Mucosa of descending colon (tissue), 3 donors: ENCODE measurements at regions of chr15 and their contacts with region 1.

Region 1: DNA sequence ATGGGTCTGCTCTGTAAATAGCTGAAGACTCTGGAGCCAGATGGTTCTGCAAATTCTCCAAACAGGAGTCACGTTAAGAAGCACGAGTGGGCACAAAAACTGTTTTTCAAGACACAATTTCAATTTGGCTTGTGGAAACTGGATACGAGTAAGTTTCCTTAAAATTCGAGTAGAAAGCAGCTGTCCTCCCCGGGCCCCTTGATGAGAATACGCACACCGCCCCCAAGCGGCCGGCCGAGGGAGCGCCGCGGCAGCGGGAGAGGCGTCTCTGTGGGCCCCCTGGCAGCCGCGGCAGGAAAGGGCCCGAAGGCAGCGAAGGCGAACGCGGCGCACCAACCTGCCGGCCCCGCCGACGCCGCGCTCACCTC is 778 bp upstream of the THBS1 start:
- DNase-seq: peak; percentile 93 to 99 (median 98)
- ATAC-seq: peak; percentile 83
- H3K4me3 ChIP-seq: peak overlapping the region; percentile 64
- H3K4me1 ChIP-seq: peaks cover 20% of the 10 kb centered on the region
- CTCF ChIP-seq: peak; percentile 96

Region 2: GRCh38 chr15:38817427-38818156 is 762.5 kb before region 1 on chr15:
- intact Hi-C with region 1: loop called in 1 of 2 experiments (anchors 10 kb)
- DNase-seq: peak; percentile 79 to 96 (median 94)
- ATAC-seq: peak; percentile 99
- H3K4me3 ChIP-seq: no peak overlapping the region
- H3K4me1 ChIP-seq: no peaks in the 10 kb centered on the region
- CTCF ChIP-seq: peak; percentile 99

Region 3: GRCh38 chr15:39171944-39172368 is 408.1 kb before region 1 on chr15:
- intact Hi-C with region 1: loop called in 1 of 2 experiments (anchors 5 kb)
- DNase-seq: peak in 2 of 3 donors; percentile 45 to 68
- ATAC-seq: peak; percentile 95
- H3K4me3 ChIP-seq: no peak overlapping the region
- H3K4me1 ChIP-seq: no peaks in the 10 kb centered on the region
- CTCF ChIP-seq: peak; percentile 13

Region 4: GRCh38 chr15:39315206-39315850 is 264.8 kb before region 1 on chr15:
- intact Hi-C with region 1: loop called (anchors 5 to 10 kb)
- DNase-seq: no peak
- ATAC-seq: no peak
- H3K4me3 ChIP-seq: no peak overlapping the region
- H3K4me1 ChIP-seq: no peaks in the 10 kb centered on the region
- CTCF ChIP-seq: no peak

Region 5: DNA sequence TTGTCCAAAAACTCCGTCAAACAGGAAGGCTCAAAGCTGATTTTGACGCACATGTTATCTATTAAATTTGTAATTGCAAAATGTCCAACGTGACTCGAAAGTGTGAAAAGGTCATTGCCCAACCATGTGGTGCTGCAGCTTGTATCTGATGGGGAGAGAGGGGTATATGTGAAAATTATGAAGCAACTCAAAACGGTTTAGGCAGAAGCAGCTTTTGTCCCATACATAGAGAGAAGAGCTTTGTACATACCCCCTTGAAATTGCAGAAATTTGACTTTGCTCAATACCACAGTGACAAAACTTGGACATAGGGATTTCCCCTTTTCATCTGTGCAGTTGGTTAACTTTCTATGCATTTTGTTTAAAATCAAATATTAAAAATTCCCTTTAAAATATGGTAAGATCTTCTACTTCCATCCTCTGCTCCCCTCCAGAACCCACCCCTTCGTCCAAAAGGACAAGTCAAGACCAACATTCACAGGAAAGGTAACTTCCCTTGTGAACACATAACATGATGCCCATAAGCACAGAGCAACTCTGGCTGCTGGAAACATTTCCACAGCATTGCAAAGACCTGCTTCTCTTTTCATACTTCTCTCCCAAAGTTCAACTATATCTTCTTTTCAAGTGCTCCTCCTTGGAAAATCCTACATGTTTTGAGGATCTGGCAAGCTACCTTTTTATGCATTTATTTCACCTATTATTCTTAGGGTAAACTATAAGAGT is 252.9 kb before region 1 on chr15:
- intact Hi-C with region 1: loop called in 1 of 2 experiments (anchors 10 kb)
- DNase-seq: no peak
- ATAC-seq: no peak
- H3K4me3 ChIP-seq: no peak overlapping the region
- H3K4me1 ChIP-seq: no peaks in the 10 kb centered on the region
- CTCF ChIP-seq: no peak

Region 6: DNA sequence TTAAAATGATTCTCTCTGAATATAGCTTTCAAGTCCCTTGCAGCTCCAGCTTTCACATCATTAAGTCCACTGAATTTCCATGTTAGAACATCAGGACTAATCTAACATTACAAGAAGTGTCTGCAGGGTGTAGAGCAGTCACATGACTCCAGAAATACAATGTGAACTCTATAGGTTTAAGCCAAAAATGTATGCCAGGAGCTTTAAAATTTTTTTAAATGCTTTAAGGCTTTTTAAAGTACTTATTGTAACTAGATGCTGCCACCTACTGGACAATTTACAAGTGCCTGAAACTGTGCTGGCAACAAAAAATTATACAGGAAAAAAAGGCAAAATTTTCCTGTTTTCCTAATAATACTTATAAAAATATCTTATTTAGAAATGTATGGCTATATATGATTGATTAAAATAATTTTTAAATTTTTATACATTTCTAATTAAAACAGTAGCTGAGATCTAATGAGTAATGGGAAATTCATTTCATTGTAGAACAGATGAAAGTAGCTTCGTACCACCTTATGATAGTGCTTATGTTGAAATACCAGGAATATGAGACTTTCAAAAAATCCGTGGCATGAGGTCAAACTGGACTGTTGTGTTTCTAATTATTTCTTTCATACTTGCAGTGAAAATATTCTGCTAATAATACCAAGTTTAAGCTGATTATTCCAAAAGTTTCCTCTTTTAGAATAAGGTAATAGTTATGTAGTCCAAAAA is 176.9 kb after region 1 on chr15:
- intact Hi-C with region 1: loop called in 1 of 2 experiments (anchors 10 kb)
- DNase-seq: peak in 1 of 3 donors; percentile 82
- ATAC-seq: peak; percentile 60
- H3K4me3 ChIP-seq: no peak overlapping the region
- H3K4me1 ChIP-seq: no peaks in the 10 kb centered on the region
- CTCF ChIP-seq: peak; percentile 63